Activated naive CD4-positive, alpha-beta T cell treated with anti-CD3 and anti-CD28 coated beads for 36 hours (primary cell): ENCODE measurements at regions of chr2 and their contacts with region 1.

Region 1: GRCh38 chr2:39728941-39729351 is 50.1 kb downstream of the THUMPD2 start:
- DNase-seq: peak; percentile 63
- H3K4me3 Mint-ChIP-seq: no peak overlapping the region
- H3K27ac Mint-ChIP-seq: no peak overlapping the region
- H3K4me1 Mint-ChIP-seq: peaks cover 2% of the 10 kb centered on the region
- H3K27me3 Mint-ChIP-seq: no peaks in the 10 kb centered on the region

Region 2: GRCh38 chr2:39059366-39059952 is 669.5 kb before region 1 on chr2:
- CTCF ChIA-PET with region 1: interaction called, 3 read pairs
- intact Hi-C with region 1: loop called (anchors 5 kb)
- DNase-seq: no peak
- H3K4me3 Mint-ChIP-seq: no peak overlapping the region
- H3K27ac Mint-ChIP-seq: no peak overlapping the region
- H3K4me1 Mint-ChIP-seq: peaks cover 2% of the 10 kb centered on the region
- H3K27me3 Mint-ChIP-seq: no peaks in the 10 kb centered on the region

Region 3: GRCh38 chr2:39243476-39244123 is 485.3 kb before region 1 on chr2 and contains the start of gene CDKL4:
- CTCF ChIA-PET with region 1: no interaction called
- intact Hi-C with region 1: loop called (anchors 1 kb)
- DNase-seq: peak; percentile 57
- H3K4me3 Mint-ChIP-seq: peak within 1 kb of the TSS; percentile 79
- H3K27ac Mint-ChIP-seq: no peak within 1 kb of the TSS
- H3K4me1 Mint-ChIP-seq: peaks cover 15% of the 10 kb centered on the region
- H3K27me3 Mint-ChIP-seq: no peaks in the 10 kb centered on the region
- total RNA-seq, gene CDKL4: not detected

Region 4: DNA sequence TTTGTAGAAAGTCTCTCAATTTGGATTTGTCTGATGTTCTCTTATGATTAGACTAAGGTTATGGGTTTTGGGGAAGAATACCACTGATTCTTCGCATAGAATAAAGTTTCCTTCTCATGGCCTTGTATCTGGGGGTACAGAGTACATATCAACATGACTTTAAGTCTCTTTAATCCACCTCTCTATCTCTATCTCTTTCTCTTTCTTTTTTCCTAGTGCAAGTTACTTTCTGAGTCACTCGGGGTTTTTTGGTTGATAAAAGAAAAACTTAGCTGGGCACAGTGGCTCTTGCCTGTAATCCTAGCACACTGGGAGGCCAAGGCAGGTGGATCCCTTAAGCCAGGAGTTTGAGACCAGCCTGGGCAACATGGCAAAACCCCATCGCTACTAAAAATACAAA is 191.8 kb before region 1 on chr2:
- CTCF ChIA-PET with region 1: interaction called, 3 read pairs
- intact Hi-C with region 1: loop called (anchors 5 kb)
- DNase-seq: peak; percentile 19
- H3K4me3 Mint-ChIP-seq: no peak overlapping the region
- H3K27ac Mint-ChIP-seq: peak overlapping the region; percentile 39
- H3K4me1 Mint-ChIP-seq: peaks cover 16% of the 10 kb centered on the region
- H3K27me3 Mint-ChIP-seq: no peaks in the 10 kb centered on the region

Region 5: GRCh38 chr2:40321016-40321623 is 592.2 kb after region 1 on chr2:
- CTCF ChIA-PET with region 1: no interaction called
- intact Hi-C with region 1: no loop called
- DNase-seq: no peak
- H3K4me3 Mint-ChIP-seq: no peak overlapping the region
- H3K27ac Mint-ChIP-seq: no peak overlapping the region
- H3K4me1 Mint-ChIP-seq: no peaks in the 10 kb centered on the region
- H3K27me3 Mint-ChIP-seq: peaks cover 3% of the 10 kb centered on the region